ENCODE measurements at regions of chr2 and their contacts with region 1.

Region 1: DNA sequence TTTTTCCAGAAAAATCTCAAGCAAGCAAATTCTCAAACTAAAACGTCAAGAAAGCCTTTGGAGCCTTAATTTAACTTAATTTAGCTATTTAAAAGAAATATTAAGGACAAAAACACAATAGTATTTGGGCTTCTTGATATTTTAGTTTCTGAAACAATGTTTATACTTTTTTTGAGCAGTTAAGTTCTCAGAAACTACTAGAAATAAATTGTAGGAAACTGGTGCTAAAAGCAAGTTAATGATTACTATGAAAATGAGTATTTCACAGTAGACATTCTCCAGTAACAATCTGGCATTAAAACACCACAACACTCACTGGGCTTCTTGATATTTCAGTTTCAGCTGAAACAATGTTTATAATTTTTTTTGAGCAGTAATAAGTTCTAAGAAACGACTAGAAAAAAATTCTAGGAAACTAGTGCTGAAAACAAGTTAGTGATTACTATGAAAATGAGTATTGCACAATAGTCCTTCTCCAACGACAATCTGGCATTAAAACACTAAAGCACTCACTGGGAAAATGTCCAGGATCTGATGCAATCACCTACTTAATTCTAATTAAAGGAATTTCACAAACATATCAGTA is 45.1 kb downstream of the TRAK2 start:
- DNase-seq: no peak
- H3K4me3 ChIP-seq: no peak overlapping the region
- H3K27ac ChIP-seq: peak overlapping the region; percentile 73
- H3K4me1 ChIP-seq: peaks cover 38% of the 10 kb centered on the region
- H3K27me3 ChIP-seq: no peaks in the 10 kb centered on the region
- CTCF ChIP-seq: no peak
- POLR2A ChIP-seq: no peak

Region 2: GRCh38 chr2:201451292-201452057 is 45.3 kb after region 1 on chr2 and contains the starts of genes STRADB and TRAK2:
- intact Hi-C with region 1: loop called (anchors 5 kb)
- DNase-seq: peak; percentile 96
- H3K4me3 ChIP-seq: peak within 1 kb of the TSS; percentile 92 to 97
- H3K27ac ChIP-seq: peak within 1 kb of the TSS; percentile 96
- H3K4me1 ChIP-seq: peaks cover 32% of the 10 kb centered on the region
- H3K27me3 ChIP-seq: no peaks in the 10 kb centered on the region
- CTCF ChIP-seq: peak in 2 of 3 experiments; percentile 17 to 19
- POLR2A ChIP-seq: peak in 1 of 2 donors; percentile 52
- total RNA-seq, gene STRADB: 9.6 TPM
- total RNA-seq, gene TRAK2: 25.8 TPM